ENCODE measurements at regions of chr7 and their contacts with region 1.

Region 1: DNA sequence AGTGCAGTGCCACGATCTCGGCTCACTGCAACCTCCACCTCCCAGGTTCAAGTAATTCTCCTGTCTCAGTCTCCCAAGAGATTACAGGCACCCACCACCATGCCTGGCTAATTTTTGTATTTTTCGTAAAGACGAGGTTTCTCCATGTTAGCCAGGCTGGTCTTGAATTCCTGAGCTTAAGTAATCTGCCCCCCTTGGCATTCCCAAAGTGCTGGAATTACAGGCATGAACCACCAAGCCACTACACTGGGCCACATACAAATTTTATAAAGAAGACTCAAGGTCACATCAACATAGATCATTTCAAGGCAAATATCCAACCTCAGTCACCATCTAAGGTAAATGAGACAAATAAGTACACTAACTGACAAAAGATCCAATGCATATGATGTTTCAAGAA is 32.1 kb downstream of the IGF2BP3 start:
- DNase-seq: no peak

Region 2: DNA sequence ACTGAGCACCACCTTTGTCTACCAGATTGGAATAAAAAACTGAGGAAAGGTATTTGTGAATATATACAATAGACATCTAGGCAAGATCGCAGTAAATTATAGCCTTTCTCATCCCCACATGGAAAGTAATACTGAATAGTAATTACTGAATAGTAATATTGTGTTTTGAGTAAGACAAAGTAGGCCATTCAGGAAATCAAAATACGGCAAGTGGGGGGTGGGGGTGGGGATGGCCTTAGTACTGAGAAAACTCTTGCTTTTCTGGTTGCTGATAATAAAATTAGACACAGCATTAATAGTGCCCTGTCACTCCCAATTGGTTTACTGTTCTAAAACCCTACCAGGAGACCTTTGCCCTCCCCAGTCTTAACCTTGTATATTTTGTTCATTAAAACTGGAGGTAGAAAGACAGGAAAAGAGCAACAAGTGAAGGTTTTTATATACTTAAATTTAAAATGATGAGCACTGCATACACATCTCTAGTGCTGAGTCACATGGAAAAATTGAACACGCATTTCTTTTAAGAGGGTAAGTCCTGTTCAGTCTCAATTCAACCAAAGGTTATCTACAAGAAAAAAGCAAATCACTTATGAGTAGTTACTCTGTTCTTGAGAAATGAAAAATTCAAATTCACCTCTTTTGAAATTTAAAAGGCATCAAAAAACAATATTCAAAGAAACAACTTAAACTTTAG is 33.5 kb before region 1 on chr7:
- in situ Hi-C with region 1: loop called (anchors 5 kb)
- DNase-seq: no peak

Measured in G401 (cell line).